Activated CD4-positive, alpha-beta memory T cell treated with anti-CD3 and anti-CD28 coated beads, Interleukin-2, amount 10 ng/mL, durations not matched to agents 7 days and 5 days (primary cell): ENCODE measurements at regions of chr10 and their contacts with region 1.

Region 1: GRCh38 chr10:132551093-132551807 is 13.7 kb downstream of the INPP5A start:
- DNase-seq: peak; percentile 47
- H3K4me3 Mint-ChIP-seq: peak overlapping the region; percentile 6
- H3K27ac Mint-ChIP-seq: peak overlapping the region; percentile 73
- H3K4me1 Mint-ChIP-seq: peaks cover 22% of the 10 kb centered on the region
- H3K27me3 Mint-ChIP-seq: no peaks in the 10 kb centered on the region

Region 2: DNA sequence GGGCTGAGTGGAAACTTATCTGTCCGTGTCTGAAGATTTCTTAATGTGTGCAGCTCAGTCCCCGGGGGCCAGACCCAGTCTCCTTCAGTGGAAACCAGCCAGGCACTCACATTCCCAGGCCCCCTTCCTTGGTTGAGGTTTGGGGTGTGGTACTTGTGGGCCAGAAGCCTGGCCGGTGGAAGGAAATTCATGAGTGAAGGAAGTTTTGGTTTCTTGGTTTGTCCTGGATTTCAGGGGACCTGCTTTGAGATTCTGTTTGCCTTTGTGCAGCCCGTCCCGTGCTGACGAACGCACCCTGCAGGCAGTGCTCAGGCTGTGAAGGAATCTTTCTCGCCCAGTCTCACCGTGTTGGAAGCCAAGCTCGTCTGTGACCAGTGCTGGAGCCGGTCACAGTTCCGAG is 10.8 kb before region 1 on chr10:
- CTCF ChIA-PET with region 1: interaction called, 16 read pairs
- POLR2A ChIA-PET with region 1: interaction called, 18 read pairs
- DNase-seq: no peak
- H3K4me3 Mint-ChIP-seq: peak overlapping the region; percentile 82
- H3K27ac Mint-ChIP-seq: peak overlapping the region; percentile 81
- H3K4me1 Mint-ChIP-seq: peaks cover 57% of the 10 kb centered on the region
- H3K27me3 Mint-ChIP-seq: peaks cover 6% of the 10 kb centered on the region